HEK293 (cell line): ENCODE measurements at regions of chr3 and their contacts with region 1.

Region 1: GRCh38 chr3:40505599-40506462 is at the start of gene ZNF620:
- H3K4me3 ChIP-seq: peak within 1 kb of the TSS; percentile 87
- H3K27ac ChIP-seq: peak within 1 kb of the TSS; percentile 77
- H3K4me1 ChIP-seq: no peaks in the 10 kb centered on the region
- CTCF ChIP-seq: peak; percentile 65

Region 2: GRCh38 chr3:40247714-40248454 is 257.9 kb before region 1 on chr3:
- CTCF ChIA-PET with region 1: no interaction called
- POLR2A ChIA-PET with region 1: no interaction called
- H3K4me3 ChIP-seq: no peak overlapping the region
- H3K27ac ChIP-seq: no peak overlapping the region
- H3K4me1 ChIP-seq: no peaks in the 10 kb centered on the region
- CTCF ChIP-seq: no peak

Region 3: DNA sequence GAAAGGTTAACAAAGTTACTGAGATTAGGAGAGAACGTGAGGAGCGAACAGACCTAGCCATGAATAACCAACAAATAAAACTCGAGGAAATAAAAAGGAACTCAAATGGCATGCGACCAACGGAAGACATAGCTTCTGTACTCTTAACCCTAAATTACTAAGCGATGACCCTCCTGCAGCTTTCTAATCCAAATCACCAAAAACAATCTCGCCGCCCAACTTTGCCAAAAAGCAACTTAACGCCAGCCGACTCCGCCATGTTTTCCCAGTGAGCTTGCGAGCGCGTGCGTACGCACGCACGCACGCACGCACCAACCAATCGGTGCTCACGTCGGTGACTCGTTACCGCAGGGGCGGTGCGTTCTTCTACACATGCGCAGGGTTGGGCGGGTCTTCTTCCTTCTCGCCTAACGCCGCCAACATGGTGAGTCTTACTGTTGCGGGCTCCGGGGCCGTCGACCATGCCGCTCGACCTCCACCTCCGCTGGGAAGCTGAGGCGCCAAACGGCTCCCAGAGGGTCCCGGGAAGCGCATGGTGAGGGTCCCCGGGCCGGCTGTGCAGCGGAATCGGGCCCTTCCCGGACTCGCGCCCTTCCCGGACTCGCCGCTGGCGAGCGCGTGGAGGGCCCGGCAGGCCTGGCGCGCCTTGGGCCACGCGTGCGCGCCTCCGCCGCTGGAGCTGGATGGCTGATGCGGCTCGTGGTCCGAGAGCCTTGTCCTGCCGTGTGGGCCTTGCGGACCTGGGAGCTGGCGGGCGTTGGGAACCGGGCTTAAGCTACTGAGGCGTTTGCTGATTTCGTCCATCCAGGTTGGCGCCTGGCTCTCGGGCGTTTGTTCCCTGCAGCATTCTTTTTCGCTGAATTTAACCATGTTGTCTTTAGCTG is 48.6 kb before region 1 on chr3 and contains the start of gene RPL14:
- CTCF ChIA-PET with region 1: interaction called, 4 read pairs
- POLR2A ChIA-PET with region 1: interaction called, 15 read pairs
- H3K4me3 ChIP-seq: peak within 1 kb of the TSS; percentile 90
- H3K27ac ChIP-seq: peak within 1 kb of the TSS; percentile 62; the same call in 1 of the 2 replicates
- H3K4me1 ChIP-seq: no peaks in the 10 kb centered on the region
- CTCF ChIP-seq: no peak

Region 4: DNA sequence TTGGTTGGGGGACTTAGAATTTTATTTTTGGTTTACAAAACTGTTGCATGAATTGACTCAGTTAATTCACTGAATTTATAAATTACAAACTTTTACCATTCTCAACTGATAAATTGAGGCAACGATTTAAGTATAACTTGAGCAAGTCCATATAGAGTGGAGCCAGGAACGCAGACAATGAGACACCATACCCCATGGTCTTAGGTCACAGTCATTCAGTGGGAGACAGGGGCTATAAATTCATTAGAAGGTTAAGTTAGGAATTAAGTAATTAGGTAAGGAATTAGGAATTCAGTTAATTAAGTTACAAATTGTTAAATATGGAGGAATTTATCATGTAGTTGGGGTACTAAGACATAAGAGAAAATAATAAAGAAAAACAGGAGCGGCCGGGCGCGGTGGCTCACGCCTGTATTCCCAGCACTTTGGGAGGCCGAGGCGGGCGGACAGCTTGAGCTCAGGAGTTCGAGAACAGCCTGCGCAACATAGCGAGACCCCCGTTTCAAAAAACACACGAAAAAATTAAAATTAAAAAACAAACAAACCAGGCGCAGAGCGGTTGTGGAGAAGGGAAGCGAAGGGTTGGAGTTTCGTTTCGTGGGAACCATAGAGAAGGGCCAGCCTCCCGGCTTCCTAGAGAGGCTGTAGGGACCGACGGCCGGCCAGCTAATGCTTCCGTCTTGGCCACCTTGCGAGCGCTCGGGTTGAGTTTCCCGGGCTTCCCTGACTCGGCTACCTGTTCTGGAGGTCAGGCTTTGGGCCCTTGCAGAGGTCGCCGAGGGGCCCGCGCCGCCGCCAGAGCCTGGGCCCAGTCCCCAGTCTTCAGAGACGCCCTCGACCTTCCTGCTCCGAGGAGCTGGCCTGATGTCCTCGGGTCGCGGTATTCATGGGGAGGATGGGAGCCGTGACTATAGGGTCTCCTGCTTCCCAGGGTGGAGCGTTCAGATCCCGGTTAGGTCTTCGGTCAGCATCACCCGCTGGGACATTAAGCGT is 29.1 kb before region 1 on chr3 and contains the start of gene ZNF619:
- CTCF ChIA-PET with region 1: no interaction called
- POLR2A ChIA-PET with region 1: interaction called, 20 read pairs
- H3K4me3 ChIP-seq: peak within 1 kb of the TSS; percentile 73
- H3K27ac ChIP-seq: peak within 1 kb of the TSS; percentile 56; the same call in 1 of the 2 replicates
- H3K4me1 ChIP-seq: no peaks in the 10 kb centered on the region; the same call in 1 of the 2 replicates
- CTCF ChIP-seq: no peak

Region 5: GRCh38 chr3:40524568-40525285 is 18.9 kb after region 1 on chr3 and contains the start of gene ZNF621:
- CTCF ChIA-PET with region 1: interaction called, 16 read pairs
- POLR2A ChIA-PET with region 1: interaction called, 41 read pairs
- H3K4me3 ChIP-seq: peak within 1 kb of the TSS; percentile 89
- H3K27ac ChIP-seq: peak within 1 kb of the TSS; percentile 75
- H3K4me1 ChIP-seq: no peaks in the 10 kb centered on the region
- CTCF ChIP-seq: peak; percentile 54; the same call in 1 of the 2 replicates